Gastrocnemius medialis (tissue), 4 donors: ENCODE measurements at regions of chr6 and their contacts with region 1.

Region 1: DNA sequence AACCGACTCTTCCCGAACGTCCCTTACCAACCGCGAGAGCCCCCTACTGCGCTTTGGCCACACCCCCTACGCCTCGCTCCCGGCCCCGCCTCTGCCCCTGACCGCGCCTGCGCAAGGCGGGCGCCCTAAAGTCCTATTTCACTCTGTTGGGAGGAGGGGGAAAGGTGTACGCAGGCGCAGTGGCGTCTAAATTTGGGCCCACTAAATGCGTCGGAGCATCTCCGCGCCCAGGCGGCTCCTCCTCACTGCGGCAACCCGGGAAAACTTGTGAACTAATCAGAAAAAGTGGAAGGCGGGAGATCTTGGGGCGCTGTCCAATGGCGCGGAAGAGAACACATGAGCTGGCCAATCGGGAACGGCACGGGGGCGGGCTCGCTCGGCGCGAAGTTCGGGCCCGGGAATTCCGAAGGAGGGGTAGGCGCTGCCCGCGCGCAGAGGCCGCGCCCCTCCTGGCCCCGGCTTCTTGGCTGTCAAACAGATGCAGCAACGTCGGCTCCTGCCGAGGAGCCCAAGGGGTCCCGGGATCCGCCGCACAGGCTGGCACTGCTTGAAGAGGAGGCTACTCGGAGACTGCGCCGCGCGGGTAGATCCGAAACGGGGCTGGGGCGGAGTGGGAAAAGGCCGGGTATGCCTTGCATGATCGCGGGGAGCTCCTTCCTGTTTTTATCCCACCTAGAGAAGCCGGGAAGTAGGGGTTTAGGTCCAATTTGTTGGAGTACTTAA is at the start of gene TCF19:
- DNase-seq: peak; percentile 98 to 99
- ATAC-seq: peak; percentile 98
- H3K4me3 ChIP-seq: peak within 1 kb of the TSS; percentile 60 to 86 (median 78)
- H3K27ac ChIP-seq: peak within 1 kb of the TSS; percentile 82 to 89 (median 86)
- H3K4me1 ChIP-seq: peaks cover 20 to 26% of the 10 kb centered on the region in 2 donors
- H3K27me3 ChIP-seq: no peaks in the 10 kb centered on the region
- CTCF ChIP-seq: no peak
- POLR2A ChIP-seq: peak; percentile 37 to 54
- total RNA-seq, gene TCF19: 1.5 to 5.1 (median 2.6) TPM

Region 2: GRCh38 chr6:31186052-31186734 is 27.9 kb after region 1 on chr6:
- in situ Hi-C with region 1: no loop called
- intact Hi-C with region 1: loop called (anchors 2 kb)
- DNase-seq: peak; percentile 52 to 78
- ATAC-seq: peak; percentile 80 to 81
- H3K4me3 ChIP-seq: peak overlapping the region; percentile 37 to 47 (median 42)
- H3K27ac ChIP-seq: peak overlapping the region; percentile 73 to 88 (median 81)
- H3K4me1 ChIP-seq: peaks cover 8 to 16% of the 10 kb centered on the region in 2 donors
- H3K27me3 ChIP-seq: no peaks in the 10 kb centered on the region
- CTCF ChIP-seq: no peak
- POLR2A ChIP-seq: peak; percentile 6 to 50